IMR-90 (cell line): ENCODE measurements at regions of chr6 and their contacts with region 1.

Region 1: DNA sequence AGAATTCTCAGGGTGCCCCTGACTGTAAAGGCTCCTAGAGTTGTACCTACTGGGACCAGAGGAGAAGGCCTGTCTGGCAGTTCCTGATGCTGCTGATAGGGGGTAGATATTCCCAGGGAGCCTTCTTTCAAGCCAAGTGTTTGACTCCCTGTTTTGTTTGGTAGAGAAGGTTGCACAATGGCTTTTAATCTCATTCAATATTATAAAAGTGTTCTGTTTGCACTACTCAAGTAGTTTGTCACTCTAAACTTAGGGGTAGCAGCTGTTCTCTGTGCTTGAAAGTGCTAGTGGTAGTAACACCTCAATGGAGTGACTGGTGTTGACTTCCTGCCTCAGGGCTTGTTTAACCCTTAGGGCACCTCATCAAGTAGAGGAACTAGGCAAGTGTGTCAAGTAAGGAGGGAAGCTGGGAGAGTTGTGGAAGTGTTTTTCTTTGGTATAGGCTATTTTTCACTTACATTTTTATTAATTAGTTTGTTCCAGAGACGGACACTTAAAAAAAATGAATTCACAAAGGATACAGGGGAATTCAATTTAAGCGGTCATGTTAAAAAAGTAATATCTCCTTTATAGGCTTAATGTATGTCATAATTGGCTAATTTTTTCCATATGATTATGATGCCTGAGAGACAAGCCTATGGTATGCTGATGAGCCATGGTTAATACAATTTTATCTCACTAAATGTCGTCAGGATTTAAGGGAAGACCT is 38.1 kb downstream of the BICRAL start:
- DNase-seq: no peak
- ATAC-seq: no peak
- H3K4me3 ChIP-seq: no peak overlapping the region
- H3K27ac ChIP-seq: no peak overlapping the region
- H3K4me1 ChIP-seq: no peaks in the 10 kb centered on the region; the same call in 1 of the 2 replicates
- H3K27me3 ChIP-seq: no peaks in the 10 kb centered on the region
- CTCF ChIP-seq: peak; percentile 20; the same call in 1 of the 2 replicates
- POLR2A ChIP-seq: no peak
- RAD21 ChIP-seq: no peak

Region 2: GRCh38 chr6:42637681-42638080 is 182.3 kb before region 1 on chr6:
- CTCF ChIA-PET with region 1: interaction called, 11 read pairs
- POLR2A ChIA-PET with region 1: no interaction called
- dilution Hi-C with region 1: no loop called
- in situ Hi-C with region 1: no loop called
- intact Hi-C with region 1: no loop called
- DNase-seq: no peak
- ATAC-seq: no peak
- H3K4me3 ChIP-seq: no peak overlapping the region
- H3K27ac ChIP-seq: no peak overlapping the region
- H3K4me1 ChIP-seq: no peaks in the 10 kb centered on the region
- H3K27me3 ChIP-seq: no peaks in the 10 kb centered on the region
- CTCF ChIP-seq: no peak
- POLR2A ChIP-seq: no peak
- RAD21 ChIP-seq: no peak

Region 3: DNA sequence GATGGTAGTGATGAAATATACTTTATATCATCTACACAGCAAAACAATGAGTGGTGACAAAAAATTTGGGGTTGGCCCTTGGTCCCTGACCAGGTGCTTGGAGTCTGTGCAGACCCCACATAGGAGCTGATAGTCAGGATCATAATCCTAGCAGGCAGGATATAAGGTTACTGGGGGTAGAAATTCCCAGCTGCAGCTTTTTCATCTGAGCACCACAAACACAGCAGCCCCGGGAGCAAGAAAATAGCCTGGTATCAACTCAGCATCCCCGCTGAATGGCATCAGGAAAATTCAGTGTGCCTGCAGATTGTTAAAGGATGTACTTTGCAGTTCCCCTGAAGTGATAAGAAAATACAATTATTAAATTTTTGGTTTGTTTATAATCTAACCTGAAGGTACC is 31.6 kb after region 1 on chr6:
- CTCF ChIA-PET with region 1: no interaction called
- POLR2A ChIA-PET with region 1: no interaction called
- dilution Hi-C with region 1: no loop called
- in situ Hi-C with region 1: no loop called
- intact Hi-C with region 1: loop called (anchors 5 kb)
- DNase-seq: no peak
- ATAC-seq: no peak
- H3K4me3 ChIP-seq: no peak overlapping the region
- H3K27ac ChIP-seq: no peak overlapping the region
- H3K4me1 ChIP-seq: no peaks in the 10 kb centered on the region
- H3K27me3 ChIP-seq: no peaks in the 10 kb centered on the region
- CTCF ChIP-seq: no peak
- POLR2A ChIP-seq: no peak
- RAD21 ChIP-seq: no peak